ENCODE measurements at regions of chr11 and their contacts with region 1.

Region 1: DNA sequence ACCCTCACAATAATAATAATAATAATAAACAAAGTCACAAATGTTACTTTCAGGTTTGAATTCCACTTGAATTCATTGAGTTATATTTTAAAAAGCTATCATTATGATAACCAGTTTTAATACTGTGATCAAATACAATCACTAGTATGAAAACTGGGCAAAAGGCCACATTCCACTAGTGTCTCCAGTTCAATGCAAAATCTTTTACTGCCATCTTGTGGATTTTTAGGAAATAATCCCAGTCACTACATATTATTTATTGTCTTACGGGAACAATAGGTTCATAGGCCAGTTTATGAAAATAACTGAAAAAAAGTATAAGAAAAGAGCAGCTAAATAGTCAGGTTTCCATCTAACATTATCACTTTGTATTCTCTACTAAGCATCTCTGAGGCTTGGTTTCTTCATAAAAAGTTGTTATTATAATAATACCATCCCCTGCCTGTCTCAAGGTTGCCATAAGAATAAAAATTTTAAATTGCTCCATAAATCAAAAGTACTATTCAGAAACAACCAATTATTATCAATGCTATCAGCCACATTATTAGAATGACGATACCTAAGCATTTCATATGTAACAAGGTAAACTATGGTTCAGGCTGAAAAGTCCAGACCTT is 533.9 kb upstream of the CCDC90B start:
- DNase-seq: no peak
- ATAC-seq: peak; percentile 75

Region 2: DNA sequence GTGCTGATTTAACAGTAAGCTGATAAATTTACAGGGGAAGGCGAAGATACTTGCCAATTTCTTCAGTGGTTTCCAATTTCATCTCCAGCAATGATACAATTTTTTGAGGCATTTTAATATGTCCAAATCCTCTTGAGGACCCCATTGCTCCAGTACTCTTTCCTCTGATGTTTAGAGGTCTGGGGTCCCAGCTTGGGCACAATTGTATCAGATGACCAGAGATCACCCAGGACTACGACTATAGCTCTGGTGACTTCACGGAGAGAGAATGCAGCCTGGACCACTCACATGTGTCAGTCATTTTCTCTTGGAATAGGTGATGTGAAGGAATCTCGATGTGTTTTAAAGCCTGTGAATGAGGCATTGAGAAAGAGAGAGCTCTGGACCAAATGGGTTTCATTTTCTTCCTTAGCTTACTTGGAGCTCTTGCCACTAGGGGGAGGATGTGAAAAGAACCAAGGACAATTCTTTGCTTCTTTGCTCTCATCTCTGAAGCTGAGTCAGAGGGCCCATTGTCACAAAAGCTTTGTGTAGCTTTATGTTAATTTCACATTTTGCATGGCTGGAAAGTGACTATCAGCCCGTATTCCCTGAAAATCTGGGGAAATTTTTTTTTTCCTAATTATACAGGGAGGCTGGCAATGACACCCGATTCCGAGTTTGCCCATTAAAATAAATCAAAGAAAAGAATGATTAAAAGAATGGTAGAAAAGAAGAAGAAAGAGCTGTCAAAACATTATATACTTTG is 527.2 kb before region 1 on chr11:
- intact Hi-C with region 1: loop called (anchors 5 kb)
- DNase-seq: no peak
- ATAC-seq: peak; percentile 81

Measured in sciatic nerve (tissue), 2 donors.